HEK293T (cell line): ENCODE measurements at regions of chr2 and their contacts with region 1.

Region 1: GRCh38 chr2:11583840-11584524 is 50.1 kb downstream of the GREB1 start:
- DNase-seq: peak; percentile 81

Region 2: GRCh38 chr2:11477994-11478393 is 106.0 kb before region 1 on chr2:
- CTCF ChIA-PET with region 1: interaction called, 84 read pairs
- POLR2A ChIA-PET with region 1: interaction called, 3 read pairs
- DNase-seq: peak; percentile 66